B cell (primary cell): ENCODE measurements at regions of chr15 and their contacts with region 1.

Region 1: GRCh38 chr15:52679232-52680040 is at the start of gene ATOSA:
- DNase-seq: peak; percentile 94
- ATAC-seq: peak; percentile 63
- H3K4me3 ChIP-seq: peak within 1 kb of the TSS; percentile 87 to 92 (median 88)
- H3K4me3 Mint-ChIP-seq: peak within 1 kb of the TSS; percentile 99
- H3K27ac ChIP-seq: peak within 1 kb of the TSS; percentile 92 to 97
- H3K27ac Mint-ChIP-seq: peak within 1 kb of the TSS; percentile 99
- H3K4me1 ChIP-seq: peaks cover 51 to 65% of the 10 kb centered on the region in 2 donors
- H3K4me1 Mint-ChIP-seq: peaks cover 76% of the 10 kb centered on the region
- H3K27me3 ChIP-seq: no peaks in the 10 kb centered on the region
- H3K27me3 Mint-ChIP-seq: no peaks in the 10 kb centered on the region
- CTCF ChIP-seq: no peak
- total RNA-seq, gene ATOSA: 198 and 206 TPM in 2 replicates

Region 2: GRCh38 chr15:50765195-50765973 is 1914.1 kb before region 1 on chr15 and contains the start of gene SPPL2A:
- CTCF ChIA-PET with region 1: no interaction called
- POLR2A ChIA-PET with region 1: no interaction called
- intact Hi-C with region 1: loop called (anchors 10 kb)
- DNase-seq: peak; percentile 91
- ATAC-seq: peak; percentile 94
- H3K4me3 ChIP-seq: peak within 1 kb of the TSS; percentile 84 to 98 (median 93)
- H3K4me3 Mint-ChIP-seq: peak within 1 kb of the TSS; percentile 88
- H3K27ac ChIP-seq: peak within 1 kb of the TSS; percentile 91
- H3K27ac Mint-ChIP-seq: peak within 1 kb of the TSS; percentile 93
- H3K4me1 ChIP-seq: peaks cover 17 to 23% of the 10 kb centered on the region in 2 donors
- H3K4me1 Mint-ChIP-seq: peaks cover 39% of the 10 kb centered on the region
- H3K27me3 ChIP-seq: no peaks in the 10 kb centered on the region
- H3K27me3 Mint-ChIP-seq: no peaks in the 10 kb centered on the region
- CTCF ChIP-seq: no peak
- total RNA-seq, gene SPPL2A: 78.3 and 78.4 TPM in 2 replicates

Region 3: GRCh38 chr15:52331490-52332240 is 347.8 kb before region 1 on chr15:
- CTCF ChIA-PET with region 1: no interaction called
- POLR2A ChIA-PET with region 1: no interaction called
- intact Hi-C with region 1: loop called (anchors 10 kb)
- DNase-seq: peak; percentile 67
- ATAC-seq: peak; percentile 90
- H3K4me3 ChIP-seq: no peak overlapping the region
- H3K4me3 Mint-ChIP-seq: no peak overlapping the region
- H3K27ac ChIP-seq: peak overlapping the region in 1 of 2 donors; percentile 20
- H3K27ac Mint-ChIP-seq: peak overlapping the region; percentile 74
- H3K4me1 ChIP-seq: peaks cover 7 to 8% of the 10 kb centered on the region in 2 donors
- H3K4me1 Mint-ChIP-seq: peaks cover 10% of the 10 kb centered on the region
- H3K27me3 ChIP-seq: no peaks in the 10 kb centered on the region
- H3K27me3 Mint-ChIP-seq: no peaks in the 10 kb centered on the region
- CTCF ChIP-seq: peak; percentile 66

Region 4: DNA sequence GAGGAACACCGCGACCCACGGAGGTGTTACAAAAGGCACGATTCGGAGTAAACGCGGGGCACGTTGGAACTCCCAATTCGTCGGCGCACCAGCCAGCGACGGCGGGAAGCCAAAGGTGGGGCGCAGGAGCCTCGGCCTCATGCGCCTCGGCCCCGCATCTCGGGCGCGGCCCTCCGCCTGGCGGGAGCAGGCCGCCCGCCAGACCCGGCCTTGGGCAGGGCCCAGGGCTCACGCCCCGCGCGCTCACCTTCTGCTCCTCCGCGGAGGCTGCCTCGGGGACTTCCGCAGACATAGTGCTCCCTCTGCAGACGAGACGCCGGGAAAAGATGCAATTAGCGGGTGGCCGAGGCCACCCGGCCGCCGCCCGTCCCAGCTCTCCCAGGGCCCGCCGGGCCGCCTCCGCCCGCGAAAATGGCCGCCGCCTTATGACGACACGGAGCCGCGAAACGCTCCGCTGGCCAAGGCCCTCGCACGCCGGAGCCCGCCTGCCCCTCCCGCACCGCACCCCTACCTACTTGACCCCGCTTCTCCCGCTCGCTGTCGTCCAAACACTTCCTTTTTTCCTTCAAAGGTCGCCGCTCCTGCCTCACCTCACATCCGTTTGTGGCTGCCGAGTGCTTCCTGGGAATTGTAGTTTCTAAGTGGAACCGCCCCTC is 110.7 kb before region 1 on chr15 and contains the start of gene ARPP19:
- CTCF ChIA-PET with region 1: no interaction called
- POLR2A ChIA-PET with region 1: no interaction called
- intact Hi-C with region 1: loop called (anchors 1 kb)
- DNase-seq: peak; percentile 93
- ATAC-seq: peak; percentile 84
- H3K4me3 ChIP-seq: peak within 1 kb of the TSS; percentile 61 to 83 (median 75)
- H3K4me3 Mint-ChIP-seq: peak within 1 kb of the TSS; percentile 98
- H3K27ac ChIP-seq: peak within 1 kb of the TSS; percentile 93 to 99
- H3K27ac Mint-ChIP-seq: peak within 1 kb of the TSS; percentile 98
- H3K4me1 ChIP-seq: peaks cover 33 to 35% of the 10 kb centered on the region in 2 donors
- H3K4me1 Mint-ChIP-seq: peaks cover 42% of the 10 kb centered on the region
- H3K27me3 ChIP-seq: no peaks in the 10 kb centered on the region
- H3K27me3 Mint-ChIP-seq: no peaks in the 10 kb centered on the region
- CTCF ChIP-seq: no peak
- total RNA-seq, gene ARPP19: 147 and 152 TPM in 2 replicates

Region 5: DNA sequence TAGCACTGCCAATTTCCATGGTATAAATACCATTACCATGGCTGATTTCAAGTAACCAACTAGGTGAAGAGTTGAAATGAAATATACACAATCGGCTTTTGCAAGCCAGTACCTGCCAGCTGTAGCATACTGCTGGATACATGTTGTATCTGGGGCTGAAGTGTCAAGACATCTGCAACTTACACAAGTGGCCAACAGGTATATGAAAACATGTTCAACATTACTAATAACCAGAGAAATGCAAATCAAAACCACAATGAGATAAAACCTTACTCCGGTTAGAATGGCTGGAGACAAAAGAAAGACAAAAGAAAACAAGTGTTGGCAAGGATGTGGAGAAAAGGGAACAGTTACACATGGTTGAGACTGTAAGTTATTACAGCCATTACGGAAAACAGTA is 11.8 kb before region 1 on chr15:
- CTCF ChIA-PET with region 1: interaction called, 4 read pairs
- POLR2A ChIA-PET with region 1: interaction called, 11 read pairs
- intact Hi-C with region 1: no loop called
- DNase-seq: no peak
- ATAC-seq: no peak
- H3K4me3 ChIP-seq: no peak overlapping the region
- H3K4me3 Mint-ChIP-seq: no peak overlapping the region
- H3K27ac ChIP-seq: peak overlapping the region in 1 of 2 donors; percentile 7
- H3K27ac Mint-ChIP-seq: no peak overlapping the region
- H3K4me1 ChIP-seq: no peaks in the 10 kb centered on the region
- H3K4me1 Mint-ChIP-seq: peaks cover 23% of the 10 kb centered on the region
- H3K27me3 ChIP-seq: no peaks in the 10 kb centered on the region
- H3K27me3 Mint-ChIP-seq: no peaks in the 10 kb centered on the region
- CTCF ChIP-seq: no peak

Region 6: GRCh38 chr15:52735231-52736089 is 56.0 kb after region 1 on chr15:
- CTCF ChIA-PET with region 1: interaction called, 94 read pairs
- POLR2A ChIA-PET with region 1: interaction called, 37 read pairs
- intact Hi-C with region 1: loop called (anchors 1 kb)
- DNase-seq: peak; percentile 88
- ATAC-seq: peak; percentile 86
- H3K4me3 ChIP-seq: no peak overlapping the region
- H3K4me3 Mint-ChIP-seq: no peak overlapping the region
- H3K27ac ChIP-seq: no peak overlapping the region
- H3K27ac Mint-ChIP-seq: no peak overlapping the region
- H3K4me1 ChIP-seq: peaks cover 12 to 14% of the 10 kb centered on the region in 2 donors
- H3K4me1 Mint-ChIP-seq: peaks cover 14% of the 10 kb centered on the region
- H3K27me3 ChIP-seq: no peaks in the 10 kb centered on the region
- H3K27me3 Mint-ChIP-seq: peaks cover 4% of the 10 kb centered on the region
- CTCF ChIP-seq: peak; percentile 96

Region 7: DNA sequence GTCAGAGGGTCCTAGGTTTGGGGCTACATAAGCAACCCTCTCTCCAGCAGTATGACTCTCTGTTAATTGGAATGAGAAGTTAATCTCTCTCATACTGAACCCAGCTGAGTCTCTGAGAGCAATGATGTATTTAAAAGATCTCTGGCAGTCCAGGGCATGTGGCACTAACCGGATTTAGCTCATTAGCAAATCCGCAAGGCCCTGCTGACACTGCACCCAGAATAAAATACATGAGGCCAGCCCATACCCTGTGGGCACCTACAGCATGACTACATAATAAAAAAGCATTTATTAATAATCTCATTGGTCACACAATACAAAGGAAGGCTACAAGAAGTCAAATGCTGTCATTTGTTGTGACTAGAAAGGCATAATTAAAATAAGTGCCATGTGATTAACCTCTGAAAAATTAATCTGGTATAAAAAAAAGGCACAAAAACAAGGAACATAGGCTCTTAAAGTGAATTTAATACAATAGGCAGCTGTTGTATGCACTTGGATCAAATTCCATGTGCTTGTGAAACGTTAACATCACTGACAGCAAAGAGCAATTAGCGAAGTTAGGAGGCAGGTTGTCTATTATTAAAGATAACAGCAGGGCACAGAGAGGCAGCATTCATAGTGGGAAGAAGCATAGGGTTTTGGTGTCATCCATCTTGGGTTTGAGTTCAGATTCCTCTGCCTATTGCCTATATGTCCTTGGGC is 698.8 kb after region 1 on chr15:
- CTCF ChIA-PET with region 1: no interaction called
- POLR2A ChIA-PET with region 1: no interaction called
- intact Hi-C with region 1: no loop called
- DNase-seq: no peak
- ATAC-seq: no peak
- H3K4me3 ChIP-seq: no peak overlapping the region
- H3K4me3 Mint-ChIP-seq: no peak overlapping the region
- H3K27ac ChIP-seq: no peak overlapping the region
- H3K27ac Mint-ChIP-seq: no peak overlapping the region
- H3K4me1 ChIP-seq: no peaks in the 10 kb centered on the region
- H3K4me1 Mint-ChIP-seq: no peaks in the 10 kb centered on the region
- H3K27me3 ChIP-seq: no peaks in the 10 kb centered on the region
- H3K27me3 Mint-ChIP-seq: no peaks in the 10 kb centered on the region
- CTCF ChIP-seq: no peak